SK-N-SH (cell line): ENCODE measurements at regions of chr3 and their contacts with region 1.

Region 1: GRCh38 chr3:57130571-57131209 is 34.5 kb downstream of the IL17RD start:
- DNase-seq: peak; percentile 81
- H3K4me3 ChIP-seq: no peak overlapping the region; a peak in 1 of 4 replicates
- H3K27ac ChIP-seq: peak overlapping the region in 1 of 2 experiments; percentile 100; a peak in 2 of 4 replicates
- H3K4me1 ChIP-seq: peaks cover 8 to 75% of the 10 kb centered on the region in 2 experiments; a peak in 3 of 4 replicates
- H3K27me3 ChIP-seq: no peaks in the 10 kb centered on the region
- CTCF ChIP-seq: no peak
- EP300 ChIP-seq: peak; percentile 9 to 98; a peak in 2 of 4 replicates
- RAD21 ChIP-seq: peak; percentile 30; the same call in 1 of the 2 replicates

Region 2: DNA sequence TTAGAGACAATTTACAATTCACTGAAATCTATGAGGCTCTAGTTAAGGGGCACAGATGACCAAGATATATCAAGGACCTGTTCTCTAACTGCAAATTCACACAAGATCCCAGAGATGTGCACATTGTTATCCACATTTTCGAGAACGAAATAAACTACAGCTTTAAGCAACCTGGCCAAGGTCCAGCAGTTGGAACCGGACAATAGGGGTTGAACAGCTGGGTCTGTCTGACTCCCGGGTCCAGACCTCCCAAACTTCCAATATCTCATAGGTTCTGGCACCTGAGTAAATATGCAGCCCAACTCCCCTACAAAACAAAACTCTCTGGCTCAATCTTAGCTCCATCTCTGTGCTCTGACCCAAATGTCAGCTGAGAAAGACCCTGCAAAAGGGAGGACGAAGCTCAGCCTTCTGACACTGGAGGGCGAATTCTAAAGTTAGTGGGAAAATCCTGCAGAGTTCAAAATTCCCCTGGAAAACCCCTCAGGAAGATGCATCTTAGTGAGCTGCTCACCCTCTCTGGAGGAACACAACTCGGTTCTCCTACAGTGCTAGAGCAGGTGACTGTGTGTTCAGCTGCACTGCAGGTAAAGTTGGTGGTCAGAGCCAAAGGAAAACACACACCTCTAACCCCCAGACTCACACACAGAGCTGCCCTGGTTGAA is 84.5 kb before region 1 on chr3:
- CTCF ChIA-PET with region 1: no interaction called
- POLR2A ChIA-PET with region 1: no interaction called
- DNase-seq: no peak
- H3K4me3 ChIP-seq: no peak overlapping the region
- H3K27ac ChIP-seq: no peak overlapping the region
- H3K4me1 ChIP-seq: peaks cover 0 to 7% of the 10 kb centered on the region in 2 experiments; a peak in 1 of 4 replicates
- H3K27me3 ChIP-seq: no peaks in the 10 kb centered on the region
- CTCF ChIP-seq: no peak
- EP300 ChIP-seq: no peak
- RAD21 ChIP-seq: no peak

Region 3: DNA sequence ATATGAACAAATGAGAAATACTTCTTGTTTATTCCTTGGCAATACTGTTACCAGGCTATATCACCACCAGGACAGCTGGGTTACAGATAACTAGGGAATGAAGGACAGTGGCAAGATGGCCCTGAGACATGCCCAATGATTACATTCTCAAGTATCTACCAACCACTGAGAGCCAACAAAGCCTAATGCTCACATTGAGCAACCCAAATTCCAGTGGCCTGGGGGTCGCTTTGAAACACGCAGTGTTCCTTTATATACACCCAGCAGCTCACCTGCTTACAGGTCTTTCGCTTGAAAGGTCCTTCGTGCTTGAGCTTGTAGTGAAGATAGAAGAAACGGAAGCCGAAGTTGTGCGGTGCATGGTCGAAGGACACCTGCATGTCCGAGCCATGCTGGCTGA is 25.1 kb before region 1 on chr3:
- CTCF ChIA-PET with region 1: interaction called, 14 read pairs
- POLR2A ChIA-PET with region 1: interaction called, 5 read pairs
- DNase-seq: no peak
- H3K4me3 ChIP-seq: no peak overlapping the region; a peak in 1 of 4 replicates
- H3K27ac ChIP-seq: peak overlapping the region in 1 of 2 experiments; percentile 29; a peak in 1 of 4 replicates
- H3K4me1 ChIP-seq: peaks cover 0 to 7% of the 10 kb centered on the region in 2 experiments; a peak in 1 of 4 replicates
- H3K27me3 ChIP-seq: no peaks in the 10 kb centered on the region
- CTCF ChIP-seq: no peak
- EP300 ChIP-seq: no peak
- RAD21 ChIP-seq: no peak

Region 4: DNA sequence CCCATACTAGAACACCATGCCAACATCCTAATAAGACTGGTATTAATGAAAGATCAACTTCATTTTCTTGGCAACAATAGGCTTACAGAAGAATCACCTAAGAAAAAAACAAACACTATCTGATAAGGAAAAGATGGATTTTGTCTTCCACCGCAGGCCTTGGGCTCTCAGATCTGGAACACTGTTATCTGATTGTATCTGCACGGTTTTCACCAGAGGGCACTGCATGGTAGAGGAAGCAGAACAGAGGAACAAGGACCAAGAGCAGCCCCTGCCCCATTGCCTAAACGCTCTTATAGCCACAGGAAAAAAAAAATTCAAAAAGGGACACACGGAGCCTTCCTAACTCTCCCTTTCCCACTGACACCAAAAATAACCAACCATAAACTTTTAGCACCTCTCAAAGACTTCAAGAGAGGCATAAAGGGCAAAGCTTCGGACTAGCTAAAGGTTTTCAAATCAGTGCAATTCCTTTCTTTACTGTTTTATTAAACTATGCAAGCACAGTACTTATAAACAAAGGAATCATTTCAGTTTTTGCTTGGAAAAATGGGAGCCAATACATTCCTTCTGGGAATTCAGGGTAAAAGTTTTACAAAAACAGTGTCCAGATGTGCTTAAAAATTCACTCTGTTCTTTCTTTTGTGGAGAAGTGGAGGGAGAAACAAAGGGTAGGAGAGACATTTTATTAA is 11.2 kb after region 1 on chr3:
- CTCF ChIA-PET with region 1: interaction called, 11 read pairs
- POLR2A ChIA-PET with region 1: interaction called, 10 read pairs
- DNase-seq: peak; percentile 79
- H3K4me3 ChIP-seq: no peak overlapping the region
- H3K27ac ChIP-seq: peak overlapping the region in 1 of 2 experiments; percentile 95; a peak in 2 of 4 replicates
- H3K4me1 ChIP-seq: peaks cover 0 to 56% of the 10 kb centered on the region in 2 experiments; a peak in 2 of 4 replicates
- H3K27me3 ChIP-seq: no peaks in the 10 kb centered on the region
- CTCF ChIP-seq: no peak; the same call in 1 of the 2 replicates
- EP300 ChIP-seq: peak; percentile 8 to 96; a peak in 2 of 4 replicates
- RAD21 ChIP-seq: peak; percentile 59

Region 5: GRCh38 chr3:57158813-57159738 is 28.4 kb after region 1 on chr3:
- CTCF ChIA-PET with region 1: interaction called, 13 read pairs
- POLR2A ChIA-PET with region 1: interaction called, 31 read pairs
- DNase-seq: no peak
- H3K4me3 ChIP-seq: no peak overlapping the region
- H3K27ac ChIP-seq: peak overlapping the region in 1 of 2 experiments; percentile 78; a peak in 2 of 4 replicates
- H3K4me1 ChIP-seq: peaks cover 7 to 89% of the 10 kb centered on the region in 2 experiments; a peak in 2 of 4 replicates
- H3K27me3 ChIP-seq: no peaks in the 10 kb centered on the region
- CTCF ChIP-seq: no peak
- EP300 ChIP-seq: no peak
- RAD21 ChIP-seq: no peak

Region 6: DNA sequence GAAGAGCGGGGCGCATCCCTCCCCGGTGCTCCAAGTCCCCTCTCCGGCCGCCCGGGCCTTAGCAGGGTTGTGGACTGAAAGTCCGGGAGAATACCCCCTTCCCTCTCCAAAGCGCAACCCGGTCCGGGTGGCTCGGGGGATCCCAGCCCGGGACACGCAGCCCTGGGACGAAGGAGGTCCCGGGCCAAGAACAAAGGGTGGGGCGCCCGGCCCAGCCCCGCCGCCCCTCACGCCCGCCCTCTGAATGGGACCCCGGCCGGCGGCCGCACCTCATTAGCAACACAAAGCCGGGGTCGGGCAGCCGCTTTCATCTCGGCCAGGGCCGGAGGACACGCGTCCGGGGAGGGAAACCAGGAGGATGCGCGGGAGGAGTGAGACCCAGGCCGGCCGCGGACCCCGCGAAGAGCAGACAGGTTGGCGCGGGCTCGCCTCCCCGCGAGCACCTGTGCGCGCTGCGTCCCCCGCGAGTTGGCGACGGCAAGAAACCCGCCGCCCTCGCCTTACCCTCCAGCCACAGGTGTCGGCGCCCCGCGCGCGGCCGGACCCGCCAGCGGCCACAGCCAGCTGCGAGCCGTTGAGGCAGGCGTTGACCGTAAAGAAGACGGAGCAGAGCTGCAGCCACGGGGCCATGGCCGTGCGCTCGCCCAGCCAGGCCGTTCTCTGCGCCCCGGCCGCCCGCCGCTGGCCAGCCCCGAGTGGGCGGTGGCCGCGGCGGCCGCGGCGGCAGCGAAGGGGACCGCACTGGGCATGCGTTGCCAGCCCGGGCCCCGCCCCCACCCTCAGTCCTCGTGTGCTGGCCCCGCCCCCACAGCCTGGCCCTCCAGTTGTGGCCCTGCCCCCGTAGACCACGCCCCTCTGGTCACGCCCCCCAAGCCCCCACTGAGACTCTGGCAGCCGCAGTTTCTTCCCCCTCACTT is 34.2 kb after region 1 on chr3 and contains the start of gene IL17RD:
- CTCF ChIA-PET with region 1: interaction called, 13 read pairs
- POLR2A ChIA-PET with region 1: interaction called, 31 read pairs
- DNase-seq: peak; percentile 98
- H3K4me3 ChIP-seq: peak within 1 kb of the TSS; percentile 76 to 82
- H3K27ac ChIP-seq: peak within 1 kb of the TSS in 1 of 2 experiments; percentile 99; a peak in 2 of 4 replicates
- H3K4me1 ChIP-seq: peaks cover 7 to 53% of the 10 kb centered on the region in 2 experiments; a peak in 2 of 4 replicates
- H3K27me3 ChIP-seq: peaks cover 15% of the 10 kb centered on the region; the same call in 1 of the 2 replicates
- CTCF ChIP-seq: no peak
- EP300 ChIP-seq: no peak
- RAD21 ChIP-seq: no peak
- polyA plus RNA-seq, gene IL17RD: 2.4 and 3.6 TPM in 2 replicates